ENCODE measurements at regions of chr6 and their contacts with region 1.

Region 1: DNA sequence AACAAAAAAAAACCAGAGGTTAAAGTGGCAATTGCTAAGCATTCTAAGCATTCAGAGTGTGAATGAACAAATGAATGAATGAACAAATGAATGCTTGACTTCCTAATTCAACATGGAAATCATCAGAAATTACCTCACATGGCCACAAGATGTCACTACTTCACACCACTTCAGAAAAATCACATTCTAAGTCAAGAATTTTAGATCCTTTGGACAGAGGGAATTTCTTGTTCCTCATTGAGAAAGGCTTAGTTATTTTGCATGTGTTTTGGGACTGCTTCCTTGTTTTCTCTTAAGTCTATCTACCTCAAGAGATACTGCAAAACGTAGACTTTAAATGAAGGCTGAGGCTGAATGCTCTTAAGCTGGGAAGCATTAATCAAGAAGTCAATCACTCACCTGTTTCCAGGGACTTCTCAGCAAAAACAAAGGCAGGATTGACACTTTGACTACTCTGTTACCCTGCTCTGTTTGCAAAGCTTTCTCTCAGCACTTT is 120.2 kb downstream of the MBOAT1 start:
- DNase-seq: peak in 4 of 5 donors; percentile 5 to 28 (median 10)
- H3K4me3 ChIP-seq: no peak overlapping the region
- H3K4me3 Mint-ChIP-seq: no peak overlapping the region
- H3K27ac ChIP-seq: no peak overlapping the region
- H3K27ac Mint-ChIP-seq: no peak overlapping the region
- H3K4me1 ChIP-seq: no peaks in the 10 kb centered on the region
- H3K4me1 Mint-ChIP-seq: no peaks in the 10 kb centered on the region
- H3K27me3 ChIP-seq: no peaks in the 10 kb centered on the region
- H3K27me3 Mint-ChIP-seq: no peaks in the 10 kb centered on the region

Region 2: DNA sequence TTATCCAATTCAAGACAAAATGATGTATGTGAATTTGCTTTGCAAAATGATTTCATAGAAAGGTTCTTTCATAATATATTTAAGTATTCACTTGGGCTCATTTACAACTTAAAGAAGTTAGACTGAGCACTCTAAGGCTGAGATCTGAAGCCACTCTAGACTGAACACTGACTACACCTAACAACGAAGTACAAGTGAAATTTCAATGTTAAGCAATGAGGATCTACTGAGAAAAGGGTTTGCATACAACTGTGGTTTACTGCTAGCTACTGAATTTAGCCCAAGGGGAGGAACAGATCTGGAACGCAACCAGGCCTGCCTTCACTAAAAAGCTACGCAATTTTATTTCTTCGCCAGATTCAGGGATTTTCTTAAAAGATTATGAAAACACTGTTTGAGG is 13.7 kb after region 1 on chr6:
- CTCF ChIA-PET with region 1: interaction called, 18 read pairs
- POLR2A ChIA-PET with region 1: no interaction called
- intact Hi-C with region 1: no loop called
- DNase-seq: no peak
- H3K4me3 ChIP-seq: no peak overlapping the region
- H3K4me3 Mint-ChIP-seq: no peak overlapping the region
- H3K27ac ChIP-seq: no peak overlapping the region
- H3K27ac Mint-ChIP-seq: peak overlapping the region in 1 of 7 donors; percentile 41
- H3K4me1 ChIP-seq: no peaks in the 10 kb centered on the region
- H3K4me1 Mint-ChIP-seq: no peaks in the 10 kb centered on the region
- H3K27me3 ChIP-seq: no peaks in the 10 kb centered on the region
- H3K27me3 Mint-ChIP-seq: no peaks in the 10 kb centered on the region

Region 3: GRCh38 chr6:20126789-20127653 is 34.9 kb after region 1 on chr6:
- CTCF ChIA-PET with region 1: interaction called, 11 read pairs
- POLR2A ChIA-PET with region 1: no interaction called
- intact Hi-C with region 1: no loop called
- DNase-seq: peak in 4 of 5 donors; percentile 27 to 45 (median 32)
- H3K4me3 ChIP-seq: no peak overlapping the region
- H3K4me3 Mint-ChIP-seq: no peak overlapping the region
- H3K27ac ChIP-seq: no peak overlapping the region
- H3K27ac Mint-ChIP-seq: peak overlapping the region in 3 of 7 donors; percentile 3 to 57 (median 38)
- H3K4me1 ChIP-seq: no peaks in the 10 kb centered on the region
- H3K4me1 Mint-ChIP-seq: peaks cover 1 to 10% (median 6%) of the 10 kb centered on the region in 4 donors
- H3K27me3 ChIP-seq: no peaks in the 10 kb centered on the region
- H3K27me3 Mint-ChIP-seq: no peaks in the 10 kb centered on the region

Region 4: DNA sequence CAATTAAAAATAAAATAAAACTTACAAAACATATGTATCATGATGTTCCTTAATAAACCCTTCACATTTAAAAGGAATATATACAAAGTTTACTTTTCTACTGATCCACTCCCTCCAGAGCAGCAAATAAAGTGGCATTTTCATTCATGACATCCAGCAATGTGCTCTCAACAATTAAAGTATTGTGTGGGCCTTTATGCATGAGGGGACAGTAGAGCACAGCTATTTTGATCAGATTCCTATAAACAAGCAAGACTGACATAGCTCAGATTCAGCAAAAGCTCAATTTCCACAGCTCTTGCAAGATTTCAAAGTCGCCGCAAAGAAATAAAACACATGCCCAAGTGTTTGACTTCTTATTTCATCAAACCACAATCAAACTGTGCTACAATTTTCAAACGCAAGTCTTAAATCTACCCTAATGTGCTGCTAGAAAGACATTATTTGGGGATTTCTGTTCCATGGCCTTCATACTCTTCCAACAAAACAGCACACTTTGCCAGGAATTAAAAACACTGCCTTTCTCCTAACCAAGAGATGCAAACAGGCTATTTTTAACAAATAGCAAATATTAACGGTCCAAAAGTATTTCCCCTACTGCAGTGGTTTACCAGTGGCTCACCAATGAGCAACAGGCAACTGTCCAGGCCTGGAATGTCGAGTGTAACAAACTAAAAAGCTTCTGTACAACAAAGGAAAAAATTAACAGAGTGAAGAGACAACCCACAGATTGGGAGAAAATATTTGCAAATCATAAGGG is 67.8 kb after region 1 on chr6:
- CTCF ChIA-PET with region 1: no interaction called
- POLR2A ChIA-PET with region 1: no interaction called
- intact Hi-C with region 1: no loop called
- DNase-seq: no peak
- H3K4me3 ChIP-seq: no peak overlapping the region
- H3K4me3 Mint-ChIP-seq: no peak overlapping the region
- H3K27ac ChIP-seq: no peak overlapping the region
- H3K27ac Mint-ChIP-seq: peak overlapping the region in 1 of 7 donors; percentile 2
- H3K4me1 ChIP-seq: no peaks in the 10 kb centered on the region
- H3K4me1 Mint-ChIP-seq: peaks cover 5 to 15% (median 7%) of the 10 kb centered on the region in 4 donors
- H3K27me3 ChIP-seq: no peaks in the 10 kb centered on the region
- H3K27me3 Mint-ChIP-seq: no peaks in the 10 kb centered on the region

Region 5: DNA sequence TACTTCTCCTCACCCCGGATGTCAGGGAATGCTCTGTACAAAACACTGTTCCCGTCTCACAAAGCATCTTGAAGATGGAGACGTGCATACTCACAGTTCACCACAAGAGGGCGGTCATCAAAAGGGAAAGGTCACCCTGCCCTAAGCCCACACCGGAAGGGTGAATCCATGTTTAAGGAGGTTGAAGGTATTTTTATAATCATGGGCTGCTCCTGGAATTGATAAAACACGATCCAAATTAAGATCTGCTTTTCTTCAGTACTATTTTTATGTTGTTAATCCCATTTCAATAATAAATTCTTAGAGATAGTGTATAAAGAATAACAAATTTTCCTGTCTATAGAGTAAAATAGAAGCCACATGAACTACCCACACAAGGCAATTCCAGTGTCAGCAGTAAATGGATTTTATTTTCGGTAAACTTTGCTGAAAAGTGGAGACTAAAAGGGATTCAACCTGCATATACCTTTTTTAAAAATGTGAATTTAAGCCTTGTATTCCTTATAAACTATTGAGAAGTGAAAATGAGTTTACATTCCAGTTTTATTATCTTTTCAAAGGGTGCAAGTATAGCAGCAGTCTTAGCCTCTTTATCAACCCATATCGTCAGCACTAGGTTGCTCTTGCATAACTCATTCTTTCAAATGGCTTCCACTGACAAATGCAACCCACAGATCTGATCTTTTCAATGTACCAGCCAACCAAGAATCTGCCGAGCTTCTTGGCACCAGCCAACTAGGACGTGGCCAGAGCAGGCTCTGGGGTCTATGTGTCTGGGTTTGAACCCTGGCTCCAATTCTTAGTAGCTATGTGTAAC is 199.9 kb after region 1 on chr6:
- CTCF ChIA-PET with region 1: interaction called, 3 read pairs
- POLR2A ChIA-PET with region 1: no interaction called
- intact Hi-C with region 1: loop called (anchors 5 kb)
- DNase-seq: peak; percentile 55 to 68 (median 61)
- H3K4me3 ChIP-seq: no peak overlapping the region
- H3K4me3 Mint-ChIP-seq: peak overlapping the region in 7 of 8 donors; percentile 4 to 65 (median 34)
- H3K27ac ChIP-seq: no peak overlapping the region
- H3K27ac Mint-ChIP-seq: peak overlapping the region in 4 of 7 donors; percentile 8 to 63 (median 47)
- H3K4me1 ChIP-seq: peaks cover 13% of the 10 kb centered on the region
- H3K4me1 Mint-ChIP-seq: peaks cover 8 to 29% (median 14%) of the 10 kb centered on the region in 4 donors
- H3K27me3 ChIP-seq: no peaks in the 10 kb centered on the region
- H3K27me3 Mint-ChIP-seq: no peaks in the 10 kb centered on the region

Region 6: GRCh38 chr6:20534295-20535262 is 442.5 kb after region 1 on chr6 and contains the start of gene CDKAL1:
- CTCF ChIA-PET with region 1: interaction called, 24 read pairs
- POLR2A ChIA-PET with region 1: no interaction called
- intact Hi-C with region 1: no loop called
- DNase-seq: peak; percentile 85 to 90 (median 86)
- H3K4me3 ChIP-seq: peak within 1 kb of the TSS; percentile 89 to 99
- H3K4me3 Mint-ChIP-seq: peak within 1 kb of the TSS; percentile 92 to 100 (median 99)
- H3K27ac ChIP-seq: peak within 1 kb of the TSS; percentile 72
- H3K27ac Mint-ChIP-seq: peak within 1 kb of the TSS; percentile 94 to 99 (median 99)
- H3K4me1 ChIP-seq: peaks cover 25% of the 10 kb centered on the region
- H3K4me1 Mint-ChIP-seq: peaks cover 22 to 52% (median 39%) of the 10 kb centered on the region in 4 donors
- H3K27me3 ChIP-seq: no peaks in the 10 kb centered on the region
- H3K27me3 Mint-ChIP-seq: no peaks in the 10 kb centered on the region
- total RNA-seq, gene CDKAL1: 22.3 to 22.7 TPM

Region 7: GRCh38 chr6:21593412-21593926 is 1501.3 kb after region 1 on chr6 and contains the start of gene SOX4:
- CTCF ChIA-PET with region 1: interaction called, 7 read pairs
- POLR2A ChIA-PET with region 1: no interaction called
- intact Hi-C with region 1: loop called (anchors 5 kb)
- DNase-seq: peak; percentile 43 to 74 (median 59)
- H3K4me3 ChIP-seq: peak within 1 kb of the TSS; percentile 51 to 57
- H3K4me3 Mint-ChIP-seq: peak within 1 kb of the TSS; percentile 86 to 93 (median 89)
- H3K27ac ChIP-seq: no peak within 1 kb of the TSS
- H3K27ac Mint-ChIP-seq: peak within 1 kb of the TSS in 5 of 7 donors; percentile 12 to 78 (median 57)
- H3K4me1 ChIP-seq: peaks cover 36% of the 10 kb centered on the region
- H3K4me1 Mint-ChIP-seq: peaks cover 15 to 29% (median 19%) of the 10 kb centered on the region in 4 donors
- H3K27me3 ChIP-seq: peaks cover 38% of the 10 kb centered on the region
- H3K27me3 Mint-ChIP-seq: peaks cover 27 to 35% of the 10 kb centered on the region in 2 donors
- total RNA-seq, gene SOX4: 0.12 to 0.14 TPM